ENCODE measurements at regions of chr10 and their contacts with region 1.

Region 1: DNA sequence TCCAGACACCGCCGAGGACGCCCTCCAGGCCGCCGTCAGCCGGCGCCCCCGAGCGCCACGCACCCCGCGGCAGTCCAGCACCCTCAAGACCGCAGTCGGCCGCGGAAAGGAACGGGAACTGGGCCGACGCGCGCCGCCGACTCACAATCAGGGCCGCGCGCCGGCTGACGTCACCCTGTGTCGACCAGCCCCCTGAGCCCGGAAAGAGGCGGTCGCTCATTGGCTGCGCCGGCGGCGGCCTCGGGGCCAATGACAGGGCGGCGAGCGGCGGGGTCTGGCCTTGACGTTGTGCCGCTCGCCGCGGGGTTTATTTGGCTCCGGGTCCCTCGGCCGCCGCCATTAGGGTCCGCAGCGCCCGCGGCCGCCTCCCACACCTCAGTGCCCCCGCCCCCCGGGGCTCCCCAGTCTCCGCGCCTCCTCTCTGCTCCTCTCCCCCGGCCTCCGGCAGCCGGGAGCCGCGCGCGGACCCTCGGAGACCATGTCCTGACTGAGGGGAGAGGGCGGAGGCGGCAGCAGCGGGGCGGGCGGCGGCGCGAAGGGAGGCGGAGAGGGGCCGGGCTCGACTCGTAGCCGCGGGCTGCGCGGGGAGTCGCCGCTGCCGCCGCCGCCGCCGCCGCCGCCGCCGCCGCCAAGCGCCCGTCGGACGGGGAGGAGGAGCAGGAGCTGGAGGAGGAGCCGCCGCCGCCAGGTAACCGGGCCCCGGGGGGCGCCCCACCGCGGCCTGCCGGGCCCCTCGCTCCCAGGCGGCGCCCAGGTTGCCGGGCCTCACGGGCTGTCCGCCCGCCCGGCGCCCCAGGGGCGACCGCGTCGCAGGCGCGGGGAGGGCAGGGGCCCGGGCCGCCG is 25.1 kb upstream of the ZRANB1 start:
- DNase-seq: peak; percentile 89
- ATAC-seq: peak; percentile 96
- H3K4me3 ChIP-seq: peak overlapping the region; percentile 81 to 100 (median 92)
- H3K27ac ChIP-seq: peak overlapping the region; percentile 93
- H3K4me1 ChIP-seq: peaks cover 39% of the 10 kb centered on the region
- H3K27me3 ChIP-seq: no peaks in the 10 kb centered on the region; a peak in 2 of 5 replicates
- CTCF ChIP-seq: peak; percentile 23; the same call in 1 of the 2 replicates
- EP300 ChIP-seq: no peak
- POLR2A ChIP-seq: peak; percentile 92 to 95
- RAD21 ChIP-seq: no peak; the same call in 1 of the 2 replicates

Region 2: GRCh38 chr10:124791378-124792348 is 125.1 kb before region 1 on chr10 and contains the start of gene EEF1AKMT2:
- CTCF ChIA-PET with region 1: no interaction called
- POLR2A ChIA-PET with region 1: interaction called, 5 read pairs
- in situ Hi-C with region 1: no loop called
- intact Hi-C with region 1: loop called (anchors 10 kb)
- DNase-seq: peak; percentile 79
- ATAC-seq: peak; percentile 98
- H3K4me3 ChIP-seq: peak within 1 kb of the TSS; percentile 84 to 92 (median 88)
- H3K27ac ChIP-seq: peak within 1 kb of the TSS; percentile 88
- H3K4me1 ChIP-seq: peaks cover 26% of the 10 kb centered on the region
- H3K27me3 ChIP-seq: no peaks in the 10 kb centered on the region; a peak in 2 of 5 replicates
- CTCF ChIP-seq: peak; percentile 66
- EP300 ChIP-seq: peak; percentile 13 to 22; a peak in 1 of 4 replicates
- POLR2A ChIP-seq: peak; percentile 87 to 90
- RAD21 ChIP-seq: peak; percentile 65; the same call in 1 of the 2 replicates
- total RNA-seq, gene EEF1AKMT2: 19.3 and 24.1 TPM in 2 replicates

Region 3: GRCh38 chr10:124864421-124865193 is 52.2 kb before region 1 on chr10:
- CTCF ChIA-PET with region 1: no interaction called
- POLR2A ChIA-PET with region 1: interaction called, 3 read pairs
- in situ Hi-C with region 1: no loop called
- intact Hi-C with region 1: loop called (anchors 5 kb)
- DNase-seq: peak; percentile 79
- ATAC-seq: peak; percentile 87
- H3K4me3 ChIP-seq: peak overlapping the region; percentile 17 to 68 (median 38); a peak in 5 of 6 replicates
- H3K27ac ChIP-seq: no peak overlapping the region
- H3K4me1 ChIP-seq: peaks cover 30% of the 10 kb centered on the region
- H3K27me3 ChIP-seq: peaks cover 0 to 11% of the 10 kb centered on the region in 2 experiments; a peak in 3 of 5 replicates
- CTCF ChIP-seq: no peak
- EP300 ChIP-seq: no peak
- POLR2A ChIP-seq: no peak
- RAD21 ChIP-seq: no peak

Region 4: DNA sequence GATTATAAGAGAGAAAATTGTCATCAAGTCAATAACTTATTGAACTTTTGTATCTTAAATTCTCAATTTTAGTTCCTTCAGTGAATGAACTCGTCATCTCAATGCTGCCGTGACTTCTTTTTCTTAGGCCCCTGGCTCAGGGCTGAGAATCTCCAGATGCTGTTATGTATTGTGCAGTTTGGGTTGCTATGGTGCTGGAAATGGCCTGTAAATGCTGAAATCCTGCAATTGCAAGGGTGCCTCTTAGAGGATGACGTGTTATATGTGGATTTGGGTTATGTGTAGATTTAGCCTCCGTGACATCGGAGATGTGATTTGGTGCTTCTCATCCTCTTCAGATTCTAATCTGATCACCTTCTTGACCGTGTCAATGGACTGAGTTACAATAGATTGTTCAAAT is 30.6 kb before region 1 on chr10:
- CTCF ChIA-PET with region 1: no interaction called
- POLR2A ChIA-PET with region 1: no interaction called
- in situ Hi-C with region 1: no loop called
- intact Hi-C with region 1: no loop called
- DNase-seq: no peak
- ATAC-seq: no peak
- H3K4me3 ChIP-seq: no peak overlapping the region
- H3K27ac ChIP-seq: no peak overlapping the region
- H3K4me1 ChIP-seq: peaks cover 8% of the 10 kb centered on the region; the same call in 1 of the 2 replicates
- H3K27me3 ChIP-seq: peaks cover 0 to 2% of the 10 kb centered on the region in 2 experiments; a peak in 1 of 5 replicates
- CTCF ChIP-seq: no peak
- EP300 ChIP-seq: no peak
- POLR2A ChIP-seq: no peak
- RAD21 ChIP-seq: no peak